Activated naive CD4-positive, alpha-beta T cell treated with anti-CD3 and anti-CD28 coated beads for 36 hours (primary cell): ENCODE measurements at regions of chr16 and their contacts with region 1.

Region 1: DNA sequence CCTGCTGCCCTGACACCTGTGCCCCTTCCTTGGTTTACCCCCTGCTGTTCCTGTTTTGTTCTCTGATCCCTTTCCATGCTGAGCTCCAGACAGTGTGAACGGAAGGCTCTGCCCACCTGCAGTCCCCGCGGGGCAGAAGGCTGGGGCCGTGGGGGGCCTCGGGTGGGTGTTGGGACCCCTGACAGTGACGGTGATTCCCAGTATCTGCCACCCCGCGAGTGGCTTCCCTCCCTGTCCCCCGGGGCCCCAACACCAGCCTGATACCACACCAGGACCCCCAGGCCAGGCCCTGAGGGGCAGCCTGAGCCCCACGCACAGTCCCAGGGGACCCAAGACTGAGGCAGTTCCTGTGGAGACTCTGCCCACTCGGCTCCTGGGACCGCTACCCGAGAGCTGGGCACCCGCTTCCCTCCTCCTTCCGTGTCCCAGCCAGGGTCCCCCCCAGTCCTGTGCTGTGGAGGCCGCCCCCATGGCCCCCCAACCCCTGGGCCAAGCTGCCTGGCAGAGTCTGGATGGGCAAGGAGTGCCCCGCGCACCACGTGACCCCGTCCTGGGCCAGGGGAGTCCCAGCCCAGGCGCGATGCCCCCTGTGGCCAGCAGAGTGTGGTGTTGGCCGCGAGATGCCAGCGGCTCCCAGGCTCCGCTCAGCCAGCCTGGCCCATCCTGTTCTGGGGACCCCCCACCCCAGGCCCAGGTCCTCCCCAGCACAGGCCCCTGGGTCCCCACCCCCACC is 10.0 kb upstream of the C1QTNF8 start:
- DNase-seq: peak; percentile 57
- H3K4me3 Mint-ChIP-seq: no peak overlapping the region
- H3K27ac Mint-ChIP-seq: no peak overlapping the region
- H3K4me1 Mint-ChIP-seq: no peaks in the 10 kb centered on the region
- H3K27me3 Mint-ChIP-seq: peaks cover 9% of the 10 kb centered on the region

Region 2: DNA sequence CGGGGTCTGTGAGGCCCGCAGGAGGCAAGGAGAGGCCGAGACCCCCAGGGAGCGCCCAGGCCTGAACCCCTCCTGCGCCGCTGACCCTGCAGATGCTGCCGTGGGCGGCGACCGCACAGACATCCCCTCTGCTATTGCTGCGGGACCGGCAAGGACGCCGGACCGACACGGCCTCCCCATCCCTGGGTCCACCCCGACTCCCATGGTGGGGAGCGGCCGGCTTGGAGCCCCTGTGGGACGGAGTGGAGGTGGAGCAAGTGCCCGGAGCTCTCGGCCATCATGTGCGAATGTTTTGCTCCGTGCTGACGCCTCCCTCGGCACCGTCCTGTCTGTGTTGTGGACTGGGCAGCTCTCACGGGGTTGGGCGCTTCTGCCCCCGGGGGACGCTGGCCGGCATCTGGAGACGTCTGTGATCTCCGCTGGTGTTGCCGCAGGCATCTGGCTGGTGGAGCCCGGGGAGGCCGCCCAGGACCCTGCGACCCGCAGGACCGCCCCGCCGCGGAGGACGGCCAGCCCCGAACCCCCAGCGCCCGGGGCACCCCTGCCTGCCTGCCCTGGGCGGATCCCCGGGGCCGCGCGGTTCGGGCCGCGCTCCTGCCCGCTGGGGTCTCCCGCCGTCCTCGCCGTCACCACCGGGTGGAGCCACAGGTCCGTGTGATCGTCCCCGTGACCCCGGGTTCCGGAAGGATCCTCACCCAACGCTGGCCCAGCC is 292.7 kb before region 1 on chr16:
- CTCF ChIA-PET with region 1: interaction called, 3 read pairs
- intact Hi-C with region 1: loop called (anchors 1 kb)
- DNase-seq: peak; percentile 61
- H3K4me3 Mint-ChIP-seq: no peak overlapping the region
- H3K27ac Mint-ChIP-seq: no peak overlapping the region
- H3K4me1 Mint-ChIP-seq: peaks cover 8% of the 10 kb centered on the region
- H3K27me3 Mint-ChIP-seq: peaks cover 13% of the 10 kb centered on the region

Region 3: DNA sequence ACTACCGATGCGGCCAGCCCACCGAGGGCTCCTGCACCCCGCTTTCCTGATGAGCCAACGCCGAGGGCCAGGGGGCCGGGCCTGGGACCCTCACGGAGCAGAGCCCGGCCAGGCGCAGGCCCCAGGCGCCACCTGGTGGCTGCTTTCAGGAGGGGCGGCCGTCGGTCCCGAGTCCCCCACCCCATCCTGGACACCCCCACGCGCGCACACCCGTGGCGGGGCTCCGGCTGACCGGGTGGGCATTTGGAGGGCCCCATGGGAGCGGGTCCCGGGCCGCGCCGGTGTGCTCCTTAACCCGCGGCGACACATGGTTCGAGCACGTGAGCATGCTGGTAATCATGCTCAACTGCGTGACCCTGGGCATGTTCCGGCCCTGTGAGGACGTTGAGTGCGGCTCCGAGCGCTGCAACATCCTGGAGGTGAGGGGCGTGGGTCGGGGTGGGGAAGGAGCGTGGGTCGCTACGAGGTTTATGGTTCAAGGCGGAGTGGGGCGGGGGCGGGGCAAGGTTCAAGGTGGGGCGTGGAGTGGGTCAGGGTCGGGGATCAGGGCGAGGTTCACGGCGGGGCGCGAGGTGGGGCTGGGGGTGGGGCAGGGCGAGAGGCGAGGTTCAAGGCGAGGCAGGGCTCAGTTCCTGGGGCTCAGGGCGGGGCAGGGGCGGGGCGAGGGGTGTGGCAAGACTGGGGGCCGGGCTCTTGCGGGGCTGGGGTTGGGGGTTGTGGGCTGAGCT is 88.8 kb after region 1 on chr16:
- CTCF ChIA-PET with region 1: no interaction called
- intact Hi-C with region 1: loop called (anchors 2 kb)
- DNase-seq: peak; percentile 15
- H3K4me3 Mint-ChIP-seq: no peak overlapping the region
- H3K27ac Mint-ChIP-seq: no peak overlapping the region
- H3K4me1 Mint-ChIP-seq: no peaks in the 10 kb centered on the region
- H3K27me3 Mint-ChIP-seq: no peaks in the 10 kb centered on the region